ENCODE measurements at regions of chr11 and their contacts with region 1.

Region 1: DNA sequence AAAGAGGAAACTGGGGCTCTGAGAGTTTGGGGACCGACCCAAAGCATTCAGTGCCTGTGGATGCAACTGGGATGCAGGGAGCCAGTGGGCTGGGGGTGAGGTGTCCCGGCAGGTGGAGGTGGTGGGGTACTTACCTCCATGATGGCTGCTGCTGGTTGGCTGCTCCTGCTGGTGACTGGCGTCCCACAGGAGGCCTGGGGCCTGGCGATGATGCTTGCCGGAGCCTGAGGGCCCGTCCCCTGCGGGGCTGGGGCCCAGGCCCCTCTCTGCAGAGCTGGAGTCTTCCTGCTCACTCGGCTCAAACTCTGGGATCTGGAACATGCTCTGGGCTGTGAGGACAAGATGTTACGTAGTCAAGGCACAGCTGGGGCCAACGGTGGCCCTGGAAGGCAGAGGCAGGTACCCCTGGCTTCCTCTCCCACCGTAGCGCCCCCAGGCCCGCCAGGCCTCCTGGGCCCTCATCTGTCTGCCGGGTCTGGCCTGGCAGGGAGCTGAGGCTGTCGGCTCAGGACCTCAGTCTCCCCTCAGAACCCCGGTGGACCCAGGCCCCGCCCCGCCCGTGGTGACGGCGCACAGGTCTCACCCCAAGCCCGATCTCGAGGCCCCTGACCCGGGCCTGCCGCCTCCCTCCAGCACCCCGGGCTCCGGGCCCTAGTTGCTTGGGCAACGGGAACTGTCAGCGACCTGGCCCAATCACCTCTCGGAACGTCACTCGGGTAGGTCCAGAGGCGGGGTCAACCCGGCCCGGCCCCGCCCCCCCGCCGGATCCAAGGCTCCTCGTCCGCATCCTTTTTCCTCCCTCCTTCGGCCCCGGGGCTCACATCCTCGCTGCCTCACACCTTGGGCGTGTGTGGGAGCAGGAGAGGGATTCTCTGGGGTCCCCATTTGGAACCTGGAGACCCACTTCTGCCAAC is at the start of gene BAD:
- DNase-seq: peak; percentile 89
- ATAC-seq: peak; percentile 84
- H3K4me3 Mint-ChIP-seq: peak within 1 kb of the TSS; percentile 85
- H3K27ac Mint-ChIP-seq: peak within 1 kb of the TSS; percentile 86
- H3K4me1 Mint-ChIP-seq: peaks cover 8% of the 10 kb centered on the region
- H3K27me3 Mint-ChIP-seq: no peaks in the 10 kb centered on the region
- total RNA-seq, gene BAD: 32.9 to 35.8 TPM

Region 2: DNA sequence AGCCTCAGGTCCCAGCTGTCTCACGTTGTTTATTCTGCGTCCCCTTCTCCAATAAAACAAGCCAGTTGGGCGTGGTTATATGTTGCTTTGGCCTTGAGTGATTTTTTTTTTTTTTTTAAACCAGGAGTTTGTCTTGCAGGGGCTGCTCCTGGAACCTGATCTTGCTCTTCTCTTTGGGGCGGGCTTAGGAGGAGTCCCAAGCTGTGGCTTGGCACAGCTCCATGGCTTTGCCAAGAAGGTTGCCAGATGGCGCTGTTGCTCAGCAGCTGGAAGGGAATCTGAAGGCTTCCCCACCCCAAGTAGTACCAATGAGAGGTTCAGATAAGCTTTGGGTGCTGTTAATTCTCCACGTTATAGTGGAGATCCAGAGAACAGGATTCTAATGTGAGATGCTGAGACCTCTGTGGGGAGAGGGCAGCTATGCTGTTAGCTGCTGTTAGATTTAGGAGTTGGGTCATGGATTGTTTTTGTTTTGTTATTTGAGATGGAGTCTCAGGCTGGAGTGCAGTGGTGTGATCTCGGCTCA is 79.8 kb before region 1 on chr11:
- POLR2A ChIA-PET with region 1: interaction called, 12 read pairs
- DNase-seq: peak; percentile 76
- ATAC-seq: peak; percentile 39
- H3K4me3 Mint-ChIP-seq: peak overlapping the region; percentile 67
- H3K27ac Mint-ChIP-seq: peak overlapping the region; percentile 87
- H3K4me1 Mint-ChIP-seq: peaks cover 34% of the 10 kb centered on the region
- H3K27me3 Mint-ChIP-seq: no peaks in the 10 kb centered on the region

Measured in activated naive CD8-positive, alpha-beta T cell treated with anti-CD3 and anti-CD28 coated beads, Interleukin-2, amount 10 ng/mL, durations not matched to agents 7 days and 5 days (primary cell).